ENCODE measurements at regions of chr20 and their contacts with region 1.

Region 1: GRCh38 chr20:44683263-44684046 is 31.7 kb upstream of the CCN5 start:
- DNase-seq: peak; percentile 81
- ATAC-seq: peak; percentile 84
- H3K4me3 Mint-ChIP-seq: no peak overlapping the region
- H3K27ac Mint-ChIP-seq: no peak overlapping the region
- H3K4me1 Mint-ChIP-seq: peaks cover 13% of the 10 kb centered on the region
- H3K27me3 Mint-ChIP-seq: no peaks in the 10 kb centered on the region

Region 2: GRCh38 chr20:44609511-44610312 is 73.7 kb before region 1 on chr20:
- CTCF ChIA-PET with region 1: interaction called, 46 read pairs
- POLR2A ChIA-PET with region 1: no interaction called
- DNase-seq: peak; percentile 87
- ATAC-seq: peak; percentile 93
- H3K4me3 Mint-ChIP-seq: peak overlapping the region; percentile 22
- H3K27ac Mint-ChIP-seq: peak overlapping the region; percentile 92
- H3K4me1 Mint-ChIP-seq: peaks cover 21% of the 10 kb centered on the region
- H3K27me3 Mint-ChIP-seq: no peaks in the 10 kb centered on the region

Region 3: DNA sequence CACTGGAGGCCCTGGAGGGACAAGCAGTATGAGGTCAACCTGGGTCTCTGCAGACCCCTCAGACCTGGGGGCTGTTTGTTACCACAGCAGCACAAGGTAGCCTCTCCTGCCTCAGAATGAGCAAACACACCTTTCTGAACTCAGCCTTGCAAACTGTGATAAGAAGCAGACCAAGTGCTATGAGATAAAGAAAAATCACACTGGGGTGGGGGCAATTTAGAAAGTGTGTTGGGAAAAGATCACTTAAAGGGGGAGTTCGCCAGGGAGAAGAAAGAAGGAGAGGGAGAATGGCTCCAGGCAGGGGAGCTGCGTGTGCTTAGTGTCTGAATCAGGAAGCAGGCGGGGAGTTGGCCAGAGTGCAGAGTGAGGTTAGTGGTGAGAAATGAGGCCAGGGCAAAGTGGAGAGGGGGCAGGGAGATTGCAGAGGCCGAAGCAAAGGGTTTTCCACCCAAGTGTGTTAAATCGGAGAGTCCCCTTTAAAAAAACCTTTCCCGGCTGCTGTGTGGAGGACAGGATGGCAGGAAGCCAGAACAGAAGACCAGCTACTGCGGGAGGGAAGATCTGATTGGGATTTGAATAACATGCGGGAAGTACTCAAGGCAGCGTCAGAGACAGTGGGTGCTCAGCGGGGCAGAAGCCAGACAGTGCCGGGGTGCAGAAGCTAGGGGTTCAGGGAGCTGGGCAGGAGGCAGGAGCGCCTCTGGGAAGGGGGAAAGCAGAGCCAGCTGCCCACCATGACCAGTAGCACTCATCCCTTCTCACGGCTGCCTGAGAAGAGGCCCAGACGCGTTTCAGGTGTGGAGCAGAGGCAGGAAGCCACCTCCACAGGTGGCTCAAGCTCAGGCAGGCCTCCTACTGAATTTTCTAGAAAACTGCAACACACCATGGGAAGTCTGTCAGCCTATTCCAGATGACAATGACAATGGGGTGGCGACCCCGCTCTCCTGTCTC is 41.0 kb before region 1 on chr20:
- CTCF ChIA-PET with region 1: interaction called, 150 read pairs
- POLR2A ChIA-PET with region 1: interaction called, 7 read pairs
- DNase-seq: peak; percentile 59
- ATAC-seq: peak; percentile 18
- H3K4me3 Mint-ChIP-seq: peak overlapping the region; percentile 57
- H3K27ac Mint-ChIP-seq: peak overlapping the region; percentile 99
- H3K4me1 Mint-ChIP-seq: peaks cover 77% of the 10 kb centered on the region
- H3K27me3 Mint-ChIP-seq: no peaks in the 10 kb centered on the region

Region 4: GRCh38 chr20:44733341-44734069 is 50.0 kb after region 1 on chr20:
- CTCF ChIA-PET with region 1: interaction called, 68 read pairs
- POLR2A ChIA-PET with region 1: interaction called, 3 read pairs
- DNase-seq: peak; percentile 75
- ATAC-seq: peak; percentile 83
- H3K4me3 Mint-ChIP-seq: no peak overlapping the region
- H3K27ac Mint-ChIP-seq: no peak overlapping the region
- H3K4me1 Mint-ChIP-seq: peaks cover 18% of the 10 kb centered on the region
- H3K27me3 Mint-ChIP-seq: no peaks in the 10 kb centered on the region

Region 5: DNA sequence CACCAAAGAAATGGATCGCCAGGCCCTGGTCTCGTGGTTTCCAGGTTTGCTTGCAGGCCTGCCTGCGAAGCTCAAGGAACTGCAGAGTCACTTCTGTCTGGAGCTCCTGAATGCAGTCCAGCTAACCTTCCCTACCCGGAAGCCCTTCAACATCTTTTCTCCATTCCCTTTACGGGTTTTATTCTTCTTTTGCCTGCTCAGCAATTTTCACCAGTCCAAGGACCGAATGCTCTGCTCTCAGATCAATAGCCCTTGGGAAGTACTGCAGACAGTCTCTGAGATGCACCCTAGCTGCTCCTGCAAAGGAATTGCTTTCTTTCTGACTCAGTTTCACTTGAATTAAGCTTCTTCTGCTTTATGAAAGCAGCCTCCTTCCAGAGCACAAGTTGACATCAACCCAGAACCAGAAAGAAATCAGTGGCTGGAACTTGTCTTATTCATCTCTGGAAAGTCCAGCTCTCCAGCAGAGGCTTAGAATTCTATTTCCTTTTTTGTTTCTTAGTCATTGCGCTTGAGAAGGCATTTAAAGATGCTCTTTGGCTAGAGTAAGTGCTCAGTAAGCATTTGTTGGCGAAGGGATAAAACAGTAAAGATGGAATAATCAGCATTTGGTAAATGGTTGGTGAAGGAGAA is 183.4 kb after region 1 on chr20:
- CTCF ChIA-PET with region 1: interaction called, 19 read pairs
- POLR2A ChIA-PET with region 1: interaction called, 3 read pairs
- DNase-seq: no peak
- ATAC-seq: no peak
- H3K4me3 Mint-ChIP-seq: peak overlapping the region; percentile 34
- H3K27ac Mint-ChIP-seq: no peak overlapping the region
- H3K4me1 Mint-ChIP-seq: peaks cover 8% of the 10 kb centered on the region
- H3K27me3 Mint-ChIP-seq: peaks cover 14% of the 10 kb centered on the region